B cell (primary cell): ENCODE measurements at regions of chr9 and their contacts with region 1.

Region 1: GRCh38 chr9:97982683-97983588 is at the start of gene ANP32B:
- DNase-seq: peak; percentile 96
- ATAC-seq: peak; percentile 79
- H3K4me3 ChIP-seq: peak within 1 kb of the TSS; percentile 25 to 97 (median 84)
- H3K4me3 Mint-ChIP-seq: peak within 1 kb of the TSS; percentile 92
- H3K27ac ChIP-seq: peak within 1 kb of the TSS; percentile 90 to 93
- H3K27ac Mint-ChIP-seq: peak within 1 kb of the TSS; percentile 98
- H3K4me1 ChIP-seq: peaks cover 28 to 34% of the 10 kb centered on the region in 2 donors
- H3K4me1 Mint-ChIP-seq: peaks cover 29% of the 10 kb centered on the region
- H3K27me3 ChIP-seq: no peaks in the 10 kb centered on the region
- H3K27me3 Mint-ChIP-seq: no peaks in the 10 kb centered on the region
- CTCF ChIP-seq: peak; percentile 96
- total RNA-seq, gene ANP32B: 138 and 150 TPM in 2 replicates

Region 2: DNA sequence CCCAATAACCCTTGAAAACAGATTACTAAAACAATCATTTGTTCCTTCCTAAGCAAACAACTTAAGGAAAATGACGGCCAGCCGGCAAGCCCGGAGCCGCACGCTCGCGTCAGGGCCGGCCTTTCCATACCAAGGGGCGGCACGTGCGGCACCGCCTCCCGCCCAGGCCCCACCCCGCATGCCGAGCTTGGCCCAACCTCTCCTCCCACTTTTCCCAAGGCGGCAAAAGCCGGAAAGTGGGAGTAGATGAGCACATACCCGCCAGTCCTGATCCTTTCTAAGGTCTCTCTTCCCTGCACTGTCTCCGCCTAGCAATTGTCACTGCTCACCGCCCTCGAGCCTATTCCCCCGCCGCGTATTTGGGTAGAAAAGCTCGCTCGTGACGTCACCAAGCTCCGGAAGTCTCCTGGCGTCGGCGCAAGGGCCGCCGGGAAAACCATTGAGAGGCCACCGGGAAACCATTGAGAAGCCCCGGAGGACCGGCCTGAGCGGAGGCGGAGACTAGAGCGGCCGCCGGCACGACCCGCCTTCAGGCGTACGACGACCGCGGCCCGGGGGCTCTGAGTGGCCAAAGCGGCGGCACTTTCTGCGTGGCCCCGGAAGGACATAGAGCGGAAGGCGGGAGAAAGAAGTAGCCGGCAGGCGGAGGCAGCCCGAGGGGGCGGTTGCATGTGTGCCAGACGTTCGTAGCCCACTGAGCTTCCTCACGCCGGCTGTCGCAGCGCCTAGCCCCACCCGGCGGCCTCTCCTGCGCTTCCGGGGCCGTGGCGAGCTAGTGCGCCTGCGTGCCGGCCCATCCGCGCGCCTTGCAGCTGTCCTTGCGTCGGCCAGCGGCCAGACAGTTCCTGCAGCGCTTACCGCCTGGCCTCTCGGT is 349.7 kb before region 1 on chr9 and contains the starts of genes NCBP1 and TSTD2:
- CTCF ChIA-PET with region 1: no interaction called
- POLR2A ChIA-PET with region 1: interaction called, 3 read pairs
- intact Hi-C with region 1: loop called (anchors 2 kb)
- DNase-seq: peak; percentile 99
- ATAC-seq: peak; percentile 91
- H3K4me3 ChIP-seq: peak within 1 kb of the TSS; percentile 94 to 99 (median 95)
- H3K4me3 Mint-ChIP-seq: peak within 1 kb of the TSS; percentile 97
- H3K27ac ChIP-seq: peak within 1 kb of the TSS; percentile 92 to 93
- H3K27ac Mint-ChIP-seq: peak within 1 kb of the TSS; percentile 98
- H3K4me1 ChIP-seq: peaks cover 26 to 35% of the 10 kb centered on the region in 2 donors
- H3K4me1 Mint-ChIP-seq: peaks cover 58% of the 10 kb centered on the region
- H3K27me3 ChIP-seq: no peaks in the 10 kb centered on the region
- H3K27me3 Mint-ChIP-seq: no peaks in the 10 kb centered on the region
- CTCF ChIP-seq: no peak
- total RNA-seq, gene NCBP1: 38.0 and 40.7 TPM in 2 replicates
- total RNA-seq, gene TSTD2: 29.2 and 31.1 TPM in 2 replicates

Region 3: DNA sequence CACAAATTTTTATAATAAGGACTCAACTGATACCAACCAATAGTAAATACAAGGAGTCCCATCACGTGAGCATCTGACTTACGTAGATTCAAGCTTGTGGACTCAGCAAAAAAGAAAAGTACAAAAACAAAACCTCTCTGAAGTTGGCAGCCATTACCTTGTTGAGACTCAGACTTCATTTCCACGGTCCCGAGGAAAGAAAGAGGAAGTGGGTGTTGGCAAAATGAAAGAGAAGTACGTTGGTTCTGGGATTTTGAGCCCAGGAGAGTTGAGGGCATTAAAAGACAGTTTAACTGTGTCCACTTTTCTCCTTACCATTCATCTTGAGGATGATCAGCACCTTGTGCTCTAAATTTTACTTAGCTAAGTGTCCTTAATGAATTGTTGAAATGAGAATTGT is 322.6 kb before region 1 on chr9:
- CTCF ChIA-PET with region 1: no interaction called
- POLR2A ChIA-PET with region 1: no interaction called
- intact Hi-C with region 1: no loop called
- DNase-seq: peak; percentile 26
- ATAC-seq: no peak
- H3K4me3 ChIP-seq: no peak overlapping the region
- H3K4me3 Mint-ChIP-seq: no peak overlapping the region
- H3K27ac ChIP-seq: peak overlapping the region in 1 of 2 donors; percentile 35
- H3K27ac Mint-ChIP-seq: no peak overlapping the region
- H3K4me1 ChIP-seq: no peaks in the 10 kb centered on the region
- H3K4me1 Mint-ChIP-seq: peaks cover 11% of the 10 kb centered on the region
- H3K27me3 ChIP-seq: no peaks in the 10 kb centered on the region
- H3K27me3 Mint-ChIP-seq: no peaks in the 10 kb centered on the region
- CTCF ChIP-seq: no peak

Region 4: GRCh38 chr9:97675655-97676054 is 307.3 kb before region 1 on chr9:
- CTCF ChIA-PET with region 1: no interaction called
- POLR2A ChIA-PET with region 1: no interaction called
- intact Hi-C with region 1: no loop called
- DNase-seq: no peak
- ATAC-seq: no peak
- H3K4me3 ChIP-seq: no peak overlapping the region
- H3K4me3 Mint-ChIP-seq: no peak overlapping the region
- H3K27ac ChIP-seq: no peak overlapping the region
- H3K27ac Mint-ChIP-seq: no peak overlapping the region
- H3K4me1 ChIP-seq: no peaks in the 10 kb centered on the region
- H3K4me1 Mint-ChIP-seq: no peaks in the 10 kb centered on the region
- H3K27me3 ChIP-seq: no peaks in the 10 kb centered on the region
- H3K27me3 Mint-ChIP-seq: no peaks in the 10 kb centered on the region
- CTCF ChIP-seq: no peak

Region 5: DNA sequence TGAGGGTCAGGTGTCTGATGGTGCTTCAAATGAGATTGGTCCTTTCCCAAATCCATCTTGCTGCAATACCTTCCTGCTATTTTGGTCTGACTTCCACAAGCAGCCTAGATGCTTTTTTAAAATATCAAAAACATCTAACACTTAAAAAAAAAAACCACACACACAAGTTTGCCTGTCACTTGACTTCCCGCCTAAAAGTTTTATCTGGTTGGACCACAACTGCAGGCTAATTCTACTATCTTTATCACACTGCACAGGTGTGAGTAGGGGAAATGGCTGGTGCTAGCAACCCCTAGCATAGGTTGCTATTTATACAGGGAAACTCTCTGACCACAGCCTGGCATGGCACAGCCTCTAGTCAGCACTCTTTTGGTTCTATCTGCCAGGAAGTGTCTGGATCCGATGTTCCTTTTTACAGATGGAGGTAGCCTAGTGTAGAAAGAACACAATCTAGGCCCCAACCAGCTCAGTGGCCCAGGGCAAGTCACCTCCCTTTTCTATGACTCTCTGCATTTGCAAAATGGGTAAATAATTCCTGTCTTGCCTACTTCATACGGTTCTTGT is 44.8 kb before region 1 on chr9 and contains the start of gene HEMGN:
- CTCF ChIA-PET with region 1: no interaction called
- POLR2A ChIA-PET with region 1: no interaction called
- intact Hi-C with region 1: no loop called
- DNase-seq: peak; percentile 42
- ATAC-seq: peak; percentile 21
- H3K4me3 ChIP-seq: no peak within 1 kb of the TSS
- H3K4me3 Mint-ChIP-seq: no peak within 1 kb of the TSS
- H3K27ac ChIP-seq: no peak within 1 kb of the TSS
- H3K27ac Mint-ChIP-seq: no peak within 1 kb of the TSS
- H3K4me1 ChIP-seq: peaks cover 3 to 6% of the 10 kb centered on the region in 2 donors
- H3K4me1 Mint-ChIP-seq: peaks cover 6% of the 10 kb centered on the region
- H3K27me3 ChIP-seq: peaks cover 0 to 13% (median 4%) of the 10 kb centered on the region in 4 experiments
- H3K27me3 Mint-ChIP-seq: peaks cover 23% of the 10 kb centered on the region
- CTCF ChIP-seq: no peak
- total RNA-seq, gene HEMGN: not detected in 2 replicates

Region 6: GRCh38 chr9:98010445-98010844 is 27.5 kb after region 1 on chr9:
- CTCF ChIA-PET with region 1: interaction called, 6 read pairs
- POLR2A ChIA-PET with region 1: interaction called, 3 read pairs
- intact Hi-C with region 1: loop called (anchors 1 kb)
- DNase-seq: peak; percentile 71
- ATAC-seq: peak; percentile 97
- H3K4me3 ChIP-seq: no peak overlapping the region
- H3K4me3 Mint-ChIP-seq: no peak overlapping the region
- H3K27ac ChIP-seq: peak overlapping the region; percentile 10 to 16
- H3K27ac Mint-ChIP-seq: peak overlapping the region; percentile 76
- H3K4me1 ChIP-seq: peaks cover 9 to 13% of the 10 kb centered on the region in 2 donors
- H3K4me1 Mint-ChIP-seq: peaks cover 23% of the 10 kb centered on the region
- H3K27me3 ChIP-seq: no peaks in the 10 kb centered on the region
- H3K27me3 Mint-ChIP-seq: no peaks in the 10 kb centered on the region
- CTCF ChIP-seq: no peak

Region 7: GRCh38 chr9:98056269-98057137 is 73.6 kb after region 1 on chr9 and contains the start of gene NANS:
- CTCF ChIA-PET with region 1: interaction called, 3 read pairs
- POLR2A ChIA-PET with region 1: interaction called, 5 read pairs
- intact Hi-C with region 1: loop called (anchors 1 kb)
- DNase-seq: peak; percentile 92
- ATAC-seq: peak; percentile 97
- H3K4me3 ChIP-seq: peak within 1 kb of the TSS; percentile 76 to 85 (median 81)
- H3K4me3 Mint-ChIP-seq: peak within 1 kb of the TSS; percentile 99
- H3K27ac ChIP-seq: peak within 1 kb of the TSS; percentile 80 to 89
- H3K27ac Mint-ChIP-seq: peak within 1 kb of the TSS; percentile 95
- H3K4me1 ChIP-seq: peaks cover 8 to 18% of the 10 kb centered on the region in 2 donors
- H3K4me1 Mint-ChIP-seq: peaks cover 17% of the 10 kb centered on the region
- H3K27me3 ChIP-seq: no peaks in the 10 kb centered on the region
- H3K27me3 Mint-ChIP-seq: no peaks in the 10 kb centered on the region
- CTCF ChIP-seq: no peak
- total RNA-seq, gene NANS: 14.9 and 15.3 TPM in 2 replicates

Region 8: DNA sequence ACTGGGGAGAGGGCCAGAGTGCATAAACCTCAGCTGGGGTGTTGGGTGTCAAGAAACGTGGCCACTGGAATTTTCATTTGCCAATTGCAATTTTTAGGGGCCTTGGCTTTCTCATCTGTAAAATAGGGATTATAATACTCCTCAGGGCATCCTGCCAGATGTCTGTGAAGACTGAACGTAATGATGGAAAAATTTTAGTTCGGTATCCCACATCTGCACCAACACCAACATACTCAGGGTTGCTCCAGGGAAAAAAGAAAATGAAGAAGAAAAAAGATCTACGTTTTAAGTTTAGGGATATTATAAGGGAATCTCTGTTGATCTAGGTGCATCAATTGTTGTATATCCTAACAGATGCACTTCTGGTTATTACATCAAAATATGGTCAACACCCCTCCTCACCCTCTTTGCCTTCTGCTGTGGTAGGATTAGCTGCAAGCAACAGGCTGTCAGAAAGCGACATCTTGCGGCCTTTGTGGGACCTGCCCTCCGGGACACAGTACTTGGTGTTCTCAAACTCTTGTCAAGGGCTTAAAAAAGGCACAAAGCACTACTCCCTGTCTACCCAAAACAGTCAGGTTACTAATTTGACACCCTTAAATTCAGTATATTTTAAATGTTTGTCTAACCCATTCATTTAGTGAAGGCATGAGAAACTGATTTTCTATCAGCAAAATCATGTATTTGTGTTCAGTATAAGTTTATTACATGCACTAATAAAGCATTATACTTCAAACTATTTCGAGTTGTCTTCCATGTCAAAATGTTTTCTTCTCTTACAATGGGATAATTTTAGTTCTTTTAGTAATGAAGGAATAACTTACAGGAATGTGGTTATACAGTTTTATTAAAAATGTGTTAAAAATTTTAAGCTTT is 280.8 kb after region 1 on chr9:
- CTCF ChIA-PET with region 1: no interaction called
- POLR2A ChIA-PET with region 1: no interaction called
- intact Hi-C with region 1: loop called (anchors 2 kb)
- DNase-seq: peak; percentile 85
- ATAC-seq: peak; percentile 100
- H3K4me3 ChIP-seq: no peak overlapping the region
- H3K4me3 Mint-ChIP-seq: no peak overlapping the region
- H3K27ac ChIP-seq: no peak overlapping the region
- H3K27ac Mint-ChIP-seq: no peak overlapping the region
- H3K4me1 ChIP-seq: no peaks in the 10 kb centered on the region
- H3K4me1 Mint-ChIP-seq: no peaks in the 10 kb centered on the region
- H3K27me3 ChIP-seq: no peaks in the 10 kb centered on the region
- H3K27me3 Mint-ChIP-seq: peaks cover 21% of the 10 kb centered on the region
- CTCF ChIP-seq: peak; percentile 94